GM18951 (cell line): ENCODE measurements at regions of chr2 and their contacts with region 1.

Region 1: DNA sequence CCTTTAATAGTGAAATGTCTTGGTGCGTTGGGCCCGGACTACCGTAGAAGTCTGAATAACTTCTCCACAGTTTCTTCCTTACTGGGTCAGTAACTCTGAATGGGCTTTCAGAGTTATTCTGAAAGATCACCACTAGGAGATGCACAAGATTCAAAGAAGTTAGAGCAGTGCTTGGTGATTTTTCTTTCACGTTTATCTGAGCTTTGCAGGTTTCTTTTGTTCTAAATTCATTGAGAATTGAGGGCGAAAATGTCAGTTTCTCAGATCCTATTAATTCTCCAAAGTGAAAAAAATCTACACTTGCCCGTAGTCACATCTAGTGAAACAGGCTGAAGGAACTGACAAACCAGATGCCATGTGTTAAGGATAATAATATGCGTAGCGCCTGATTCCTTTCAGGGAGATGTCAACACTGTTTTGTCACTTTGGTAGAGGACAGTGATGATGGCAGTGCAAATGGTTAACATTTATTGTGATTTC is 70.1 kb downstream of the QPCT start:
- POLR2A ChIP-seq: no peak

Region 2: GRCh38 chr2:36589230-36589630 is 825.3 kb before region 1 on chr2:
- in situ Hi-C with region 1: no loop called
- POLR2A ChIP-seq: no peak

Region 3: DNA sequence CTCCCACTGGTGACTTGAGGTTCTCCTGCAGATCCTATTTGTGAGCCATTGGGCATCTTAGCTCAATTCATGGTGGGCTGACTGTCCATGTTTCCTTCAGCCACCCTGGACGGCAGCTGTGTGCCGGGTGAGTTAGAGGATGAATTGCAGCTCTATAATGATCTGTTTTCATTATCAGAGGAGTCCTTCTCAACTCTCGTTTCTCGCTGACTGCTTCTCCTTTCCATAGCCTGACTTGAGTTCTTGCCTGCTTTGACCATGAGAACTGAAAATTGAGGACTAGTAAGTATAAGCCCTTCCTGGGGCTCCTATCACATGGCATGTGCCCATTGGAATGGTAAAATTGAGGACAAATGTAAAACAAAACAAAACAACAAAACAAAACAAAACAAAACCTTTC is 135.1 kb after region 1 on chr2:
- in situ Hi-C with region 1: loop called (anchors 10 kb)
- POLR2A ChIP-seq: no peak

Region 4: GRCh38 chr2:37648331-37649011 is 234.0 kb after region 1 on chr2:
- in situ Hi-C with region 1: loop called (anchors 10 kb)
- POLR2A ChIP-seq: no peak

Region 5: DNA sequence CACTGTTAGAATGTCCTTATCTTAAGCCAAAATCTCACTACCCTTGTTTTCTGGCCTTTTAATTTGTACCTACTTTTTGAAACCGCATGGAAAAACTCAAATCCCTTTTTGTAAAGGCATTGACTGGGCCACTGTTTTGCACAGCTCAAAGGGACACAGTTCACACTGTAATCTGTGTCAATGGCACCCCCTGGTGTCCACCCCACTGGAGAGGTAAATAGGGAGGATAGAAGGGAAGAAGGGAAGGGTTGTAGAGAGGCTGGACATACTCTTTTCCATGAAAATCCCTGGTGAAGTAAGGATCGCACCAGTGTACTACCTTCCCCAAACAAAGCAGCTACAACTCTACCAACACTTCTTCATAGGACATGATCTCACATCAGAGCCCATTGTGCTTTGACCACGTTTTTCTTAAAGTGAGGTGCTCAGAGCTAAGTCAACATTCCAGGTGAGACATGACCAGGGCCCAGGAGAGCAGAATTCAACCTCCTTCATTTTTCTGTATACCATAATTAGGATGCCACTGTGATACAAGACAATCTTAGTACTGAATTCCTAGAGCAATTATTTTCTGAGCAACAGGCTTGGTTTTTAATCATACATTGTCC is 418.2 kb after region 1 on chr2:
- in situ Hi-C with region 1: loop called (anchors 10 kb)
- POLR2A ChIP-seq: no peak

Region 6: GRCh38 chr2:37890893-37891495 is 476.5 kb after region 1 on chr2:
- in situ Hi-C with region 1: loop called (anchors 5 kb)
- POLR2A ChIP-seq: no peak